ENCODE measurements at regions of chr5 and their contacts with region 1.

Region 1: DNA sequence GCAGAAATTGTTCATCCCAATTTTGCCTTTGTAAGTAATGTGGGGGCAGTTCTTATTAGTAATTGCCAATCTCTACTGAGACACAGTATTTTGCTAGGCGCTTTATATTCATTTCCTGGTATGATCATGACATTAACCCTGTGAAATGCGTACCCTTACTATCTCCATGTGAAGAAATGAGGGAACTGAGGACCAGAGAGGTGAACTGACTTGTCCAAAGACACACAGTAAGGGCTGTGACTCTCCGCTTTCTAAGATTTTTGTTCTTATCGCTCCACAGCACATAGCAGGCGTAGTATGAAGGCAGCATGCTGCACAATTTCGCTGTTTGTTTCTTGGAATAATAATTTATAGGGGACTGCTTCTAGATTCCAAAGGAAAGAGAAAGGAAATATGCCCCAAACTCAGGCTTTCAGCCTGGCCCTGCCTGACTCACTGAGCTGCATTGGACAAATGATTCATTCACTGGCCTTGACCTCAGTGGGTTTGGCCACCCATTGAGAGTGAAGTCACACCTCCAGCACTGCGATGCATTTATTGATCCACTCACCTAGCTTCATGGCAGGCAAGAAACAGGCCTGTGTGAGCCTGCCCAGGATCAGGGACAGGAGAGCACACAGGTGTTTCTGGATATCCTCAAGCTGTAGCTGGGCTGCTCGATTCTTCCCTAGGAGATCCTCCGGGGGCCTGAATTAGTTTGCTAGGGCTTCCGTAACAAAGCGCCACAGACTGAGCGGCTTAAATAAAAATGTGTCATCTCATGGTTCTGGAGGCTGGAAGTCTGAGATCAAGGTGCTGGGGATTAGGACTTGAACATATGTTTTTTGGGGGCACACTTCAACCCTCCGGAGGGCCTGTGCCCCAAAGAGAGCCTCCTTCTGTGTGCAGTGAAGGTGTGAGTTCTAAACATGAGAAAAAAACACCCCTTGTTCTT is 7.2 kb upstream of the DUSP1 start:
- DNase-seq: peak; percentile 65
- H3K4me3 ChIP-seq: no peak overlapping the region
- H3K27ac ChIP-seq: peak overlapping the region; percentile 85
- H3K4me1 ChIP-seq: peaks cover 21% of the 10 kb centered on the region
- H3K27me3 ChIP-seq: no peaks in the 10 kb centered on the region
- CTCF ChIP-seq: no peak
- POLR2A ChIP-seq: no peak

Region 2: DNA sequence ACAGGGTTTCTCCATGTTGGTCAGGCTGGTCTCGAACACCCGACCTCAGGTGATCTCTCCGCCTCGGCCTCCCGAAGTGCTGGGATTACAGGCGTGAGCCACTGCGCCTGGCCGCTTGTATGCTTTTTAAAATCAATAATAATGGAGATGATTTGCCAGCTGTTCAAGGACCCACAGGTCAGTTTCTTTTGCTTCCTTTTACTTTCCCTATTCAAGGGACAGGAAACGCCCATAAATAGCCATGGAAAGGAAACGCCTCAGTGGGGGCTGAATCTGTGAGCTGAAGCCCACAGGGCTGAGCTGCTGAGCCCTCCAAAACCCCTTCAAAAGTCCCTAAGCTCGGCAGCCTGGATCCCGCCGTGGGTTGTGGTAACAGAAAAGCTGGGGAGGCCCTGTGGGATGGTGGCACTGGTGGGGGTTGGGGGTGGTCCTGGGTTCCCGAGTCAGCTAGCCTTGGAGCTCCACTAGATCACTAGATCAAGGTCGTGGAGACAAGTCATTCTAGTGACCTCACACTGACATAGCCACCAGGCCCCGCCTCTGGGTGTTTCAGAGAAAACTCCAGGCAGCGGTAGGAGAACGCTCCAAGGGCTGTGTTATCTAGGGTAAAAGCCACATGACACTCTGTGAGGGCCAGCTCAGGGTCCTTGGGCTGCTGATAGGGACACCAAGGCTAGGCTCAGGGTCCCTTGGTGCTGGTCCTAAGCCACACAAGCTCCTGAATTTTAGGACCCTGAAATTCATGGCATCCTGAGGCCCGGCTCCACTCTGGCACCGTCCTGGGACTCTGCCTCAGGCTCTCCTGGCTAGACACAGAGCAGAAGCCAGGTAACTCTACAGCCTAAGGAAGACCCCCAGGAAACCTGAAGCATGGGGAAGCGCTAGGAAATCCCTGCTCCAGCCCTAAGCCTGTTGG is 10.9 kb after region 1 on chr5:
- CTCF ChIA-PET with region 1: interaction called, 44 read pairs
- POLR2A ChIA-PET with region 1: interaction called, 3 read pairs
- dilution Hi-C with region 1: no loop called
- intact Hi-C with region 1: loop called (anchors 1 kb)
- DNase-seq: no peak
- H3K4me3 ChIP-seq: no peak overlapping the region
- H3K27ac ChIP-seq: peak overlapping the region; percentile 18
- H3K4me1 ChIP-seq: peaks cover 23% of the 10 kb centered on the region
- H3K27me3 ChIP-seq: no peaks in the 10 kb centered on the region
- CTCF ChIP-seq: no peak
- POLR2A ChIP-seq: no peak

Region 3: DNA sequence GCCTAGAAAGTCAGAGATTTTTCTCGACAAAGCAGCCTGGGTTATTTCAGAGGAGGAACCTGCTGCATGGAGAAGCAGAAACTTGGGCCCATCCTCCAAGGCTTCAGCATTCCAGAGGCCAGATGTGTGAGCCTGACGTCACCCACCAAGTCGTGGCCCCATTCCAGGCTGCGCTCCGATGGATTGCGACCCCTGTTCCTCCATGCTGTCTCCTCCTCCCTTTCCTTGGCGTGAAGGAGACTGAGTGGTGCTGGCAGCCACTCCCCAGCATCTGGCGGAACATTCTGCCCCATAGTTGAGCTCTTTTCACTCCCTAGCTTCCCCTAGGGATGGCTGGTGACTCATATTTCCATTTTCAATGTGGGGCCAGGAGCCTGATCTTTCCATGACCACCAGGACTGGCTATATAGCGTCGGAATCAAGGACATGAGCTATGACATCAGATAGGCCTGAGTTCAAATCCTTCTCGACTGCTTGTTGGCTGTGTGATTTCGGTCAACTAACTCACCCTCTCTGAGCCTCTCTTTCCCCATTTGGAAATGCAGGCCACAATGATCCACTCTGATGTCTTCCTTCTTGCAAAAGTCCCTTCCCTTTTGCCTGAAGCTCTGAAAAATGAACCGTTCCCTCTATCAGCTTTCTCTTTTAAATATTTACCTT is 17.3 kb after region 1 on chr5:
- CTCF ChIA-PET with region 1: interaction called, 44 read pairs
- POLR2A ChIA-PET with region 1: interaction called, 3 read pairs
- dilution Hi-C with region 1: no loop called
- intact Hi-C with region 1: loop called (anchors 1 kb)
- DNase-seq: peak; percentile 96
- H3K4me3 ChIP-seq: no peak overlapping the region
- H3K27ac ChIP-seq: peak overlapping the region; percentile 76
- H3K4me1 ChIP-seq: peaks cover 48% of the 10 kb centered on the region
- H3K27me3 ChIP-seq: no peaks in the 10 kb centered on the region
- CTCF ChIP-seq: no peak
- POLR2A ChIP-seq: no peak

Measured in endothelial cell of umbilical vein (primary cell).